ENCODE measurements at regions of chr10 and their contacts with region 1.

Region 1: DNA sequence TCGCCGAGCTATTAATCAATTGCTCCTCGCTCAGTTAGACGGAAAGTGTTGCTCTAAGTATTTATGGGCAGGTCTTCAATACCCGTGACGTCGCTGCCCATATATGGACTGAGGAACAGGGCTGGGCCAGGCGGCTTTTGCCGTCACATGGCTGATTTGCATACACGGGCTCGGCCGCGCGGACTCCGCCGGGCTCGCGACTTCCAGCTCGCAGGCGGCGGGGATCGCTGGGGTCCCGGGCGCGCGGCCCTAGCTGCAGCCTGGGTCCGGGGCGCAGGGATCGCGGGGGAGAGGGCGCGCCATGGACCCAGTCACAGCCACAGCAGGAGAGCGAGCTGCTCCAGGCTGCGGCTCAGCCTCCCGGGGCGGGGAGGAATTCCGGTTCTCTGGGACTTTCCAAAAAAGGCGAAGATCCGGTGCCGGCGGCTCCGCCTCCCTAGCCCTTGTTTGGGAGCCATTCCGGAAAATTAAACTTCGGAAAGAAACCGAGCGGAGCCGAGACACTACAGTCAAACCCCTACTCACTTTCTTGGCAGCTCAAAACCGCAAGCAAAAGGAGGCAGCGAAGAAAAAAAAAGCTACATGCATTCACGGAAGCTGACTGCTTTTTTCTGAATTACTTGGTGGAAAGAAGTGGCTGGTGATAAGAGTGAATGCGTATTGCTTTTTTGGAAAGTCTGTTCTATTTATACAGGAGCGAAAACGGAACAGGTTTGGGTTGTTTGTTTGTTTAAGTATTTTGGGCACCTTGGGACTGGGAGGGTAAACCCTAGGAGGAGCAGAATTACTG is at the start of gene EGR2:
- DNase-seq: peak; percentile 96
- H3K4me3 Mint-ChIP-seq: peak within 1 kb of the TSS; percentile 81
- H3K27ac Mint-ChIP-seq: peak within 1 kb of the TSS; percentile 56
- H3K4me1 Mint-ChIP-seq: peaks cover 10% of the 10 kb centered on the region
- H3K27me3 Mint-ChIP-seq: peaks cover 72% of the 10 kb centered on the region
- CTCF ChIP-seq: no peak
- total RNA-seq, gene EGR2: 0.68 and 1.1 TPM in 2 replicates

Region 2: GRCh38 chr10:62250594-62251198 is 565.8 kb before region 1 on chr10:
- CTCF ChIA-PET with region 1: no interaction called
- intact Hi-C with region 1: loop called (anchors 10 kb)
- DNase-seq: peak; percentile 48
- H3K4me3 Mint-ChIP-seq: no peak overlapping the region
- H3K27ac Mint-ChIP-seq: peak overlapping the region; percentile 21
- H3K4me1 Mint-ChIP-seq: peaks cover 41% of the 10 kb centered on the region
- H3K27me3 Mint-ChIP-seq: no peaks in the 10 kb centered on the region
- CTCF ChIP-seq: no peak

Region 3: DNA sequence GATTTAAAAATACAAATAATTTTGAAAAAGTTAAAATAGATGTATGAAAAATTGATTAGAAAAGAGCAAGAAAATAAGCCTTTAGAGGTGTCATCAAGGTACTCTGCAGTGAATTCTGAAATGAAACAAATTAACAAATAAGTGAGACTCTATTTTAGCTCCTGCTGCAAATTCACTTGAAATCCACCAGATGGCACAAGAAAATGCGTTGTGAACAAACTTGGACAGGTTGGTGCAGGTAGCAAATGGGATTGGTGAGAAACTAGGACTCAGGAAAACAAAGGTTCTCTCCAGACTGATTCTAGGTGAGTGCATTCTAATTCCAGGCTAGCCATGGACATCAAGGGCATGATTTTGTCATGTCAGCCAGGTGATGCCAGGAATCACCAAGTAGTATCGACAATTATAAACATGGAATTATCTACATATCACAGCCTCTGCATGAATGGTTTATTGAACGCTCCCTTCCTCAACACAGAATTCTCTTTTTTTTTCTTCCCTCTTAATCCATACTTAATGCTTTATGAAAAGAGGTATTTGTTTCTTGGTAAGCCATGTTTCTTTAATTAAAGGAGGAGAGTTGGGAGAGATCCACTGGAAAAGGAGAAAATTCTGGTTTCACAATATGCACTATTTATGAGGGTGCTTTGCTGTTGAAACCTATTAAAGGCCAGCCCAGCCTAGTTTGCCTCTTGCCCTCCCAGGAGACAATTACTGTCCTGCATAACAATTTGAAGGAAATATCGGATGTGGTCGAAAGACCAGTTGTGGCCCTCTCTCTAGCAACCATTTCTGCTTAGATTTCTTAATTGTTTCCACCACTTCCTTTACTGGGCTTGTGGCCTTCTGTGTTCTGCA is 324.3 kb before region 1 on chr10:
- CTCF ChIA-PET with region 1: no interaction called
- intact Hi-C with region 1: loop called (anchors 5 kb)
- DNase-seq: peak; percentile 33
- H3K4me3 Mint-ChIP-seq: no peak overlapping the region
- H3K27ac Mint-ChIP-seq: no peak overlapping the region
- H3K4me1 Mint-ChIP-seq: no peaks in the 10 kb centered on the region
- H3K27me3 Mint-ChIP-seq: no peaks in the 10 kb centered on the region
- CTCF ChIP-seq: peak; percentile 57

Region 4: GRCh38 chr10:62610649-62611229 is 205.8 kb before region 1 on chr10:
- CTCF ChIA-PET with region 1: interaction called, 54 read pairs
- intact Hi-C with region 1: loop called (anchors 1 kb)
- DNase-seq: peak; percentile 82
- H3K4me3 Mint-ChIP-seq: no peak overlapping the region
- H3K27ac Mint-ChIP-seq: no peak overlapping the region
- H3K4me1 Mint-ChIP-seq: no peaks in the 10 kb centered on the region
- H3K27me3 Mint-ChIP-seq: no peaks in the 10 kb centered on the region
- CTCF ChIP-seq: peak; percentile 94

Region 5: GRCh38 chr10:62831346-62831745 is 14.8 kb after region 1 on chr10:
- CTCF ChIA-PET with region 1: interaction called, 10 read pairs
- intact Hi-C with region 1: no loop called
- DNase-seq: no peak
- H3K4me3 Mint-ChIP-seq: no peak overlapping the region
- H3K27ac Mint-ChIP-seq: no peak overlapping the region
- H3K4me1 Mint-ChIP-seq: no peaks in the 10 kb centered on the region
- H3K27me3 Mint-ChIP-seq: no peaks in the 10 kb centered on the region
- CTCF ChIP-seq: no peak

Region 6: DNA sequence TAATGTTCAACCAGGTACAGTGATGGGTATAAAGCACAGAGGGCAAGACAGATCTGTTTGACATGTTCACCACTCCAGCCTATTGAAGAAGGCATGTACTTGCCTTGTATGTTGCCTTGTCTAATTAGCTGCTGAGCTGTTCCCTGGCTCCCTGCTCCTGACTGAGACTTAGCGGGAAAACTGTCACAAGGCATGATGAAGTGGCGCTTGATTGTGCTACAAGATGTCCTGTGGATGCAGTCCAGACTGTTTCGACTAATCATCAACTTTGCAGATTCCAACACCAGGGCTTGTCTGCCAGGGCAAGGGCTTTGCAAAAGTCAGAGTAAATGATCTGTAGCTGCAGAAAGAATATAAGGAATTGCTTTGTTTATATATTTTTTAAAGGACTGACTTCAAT is 180.4 kb after region 1 on chr10:
- CTCF ChIA-PET with region 1: no interaction called
- intact Hi-C with region 1: no loop called
- DNase-seq: no peak
- H3K4me3 Mint-ChIP-seq: no peak overlapping the region
- H3K27ac Mint-ChIP-seq: no peak overlapping the region
- H3K4me1 Mint-ChIP-seq: no peaks in the 10 kb centered on the region
- H3K27me3 Mint-ChIP-seq: no peaks in the 10 kb centered on the region
- CTCF ChIP-seq: no peak

Region 7: DNA sequence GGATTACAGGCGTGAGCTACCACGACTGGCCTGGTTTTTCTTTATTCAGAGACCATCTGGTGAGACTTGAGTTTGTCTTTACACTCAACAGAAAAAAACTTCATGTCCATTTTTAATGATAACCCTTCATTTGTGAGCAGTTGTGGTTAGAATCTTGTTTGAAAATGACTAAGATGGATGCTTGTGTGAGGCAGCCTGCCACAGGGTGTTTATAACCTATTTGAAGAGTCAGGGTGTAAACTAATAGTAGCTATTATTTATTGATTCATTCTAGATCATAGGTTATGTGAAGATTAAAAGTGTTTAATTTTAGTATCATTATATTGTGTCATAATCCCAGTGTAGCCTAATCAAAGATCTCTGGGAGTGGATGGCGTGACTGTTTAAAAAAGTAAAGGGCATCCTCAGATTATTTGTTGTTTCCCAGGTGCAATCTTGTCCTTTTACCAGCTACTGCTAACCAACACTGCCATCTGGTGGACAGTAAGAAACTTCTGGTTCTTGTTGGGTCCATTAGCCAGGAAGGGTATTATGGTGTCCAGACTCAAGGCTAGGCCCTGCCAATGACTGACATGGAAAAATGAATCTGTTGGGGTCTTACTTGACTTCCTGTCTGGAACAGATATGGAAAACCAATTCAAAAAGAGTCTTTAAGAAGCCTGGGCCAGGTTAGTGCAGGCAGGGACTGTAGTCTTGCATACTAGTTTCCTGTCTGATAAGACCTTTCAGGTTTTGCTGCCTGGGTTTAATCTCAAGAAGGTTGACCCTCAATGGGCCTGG is 341.5 kb after region 1 on chr10:
- CTCF ChIA-PET with region 1: interaction called, 7 read pairs
- intact Hi-C with region 1: loop called (anchors 5 kb)
- DNase-seq: peak; percentile 59
- H3K4me3 Mint-ChIP-seq: no peak overlapping the region
- H3K27ac Mint-ChIP-seq: no peak overlapping the region
- H3K4me1 Mint-ChIP-seq: no peaks in the 10 kb centered on the region
- H3K27me3 Mint-ChIP-seq: no peaks in the 10 kb centered on the region
- CTCF ChIP-seq: peak; percentile 82

Measured in Calu3 (cell line).